Tibial artery (tissue), 4 donors: ENCODE measurements at regions of chr12 and their contacts with region 1.

Region 1: GRCh38 chr12:46661110-46661845 is 164.5 kb downstream of the SLC38A4 start:
- DNase-seq: peak in 1 of 2 donors; percentile 29
- H3K4me3 ChIP-seq: no peak overlapping the region
- H3K27ac ChIP-seq: peak overlapping the region; percentile 62 to 67
- H3K4me1 ChIP-seq: peaks cover 0 to 51% (median 43%) of the 10 kb centered on the region in 4 donors
- H3K27me3 ChIP-seq: no peaks in the 10 kb centered on the region
- CTCF ChIP-seq: peak; percentile 84 to 87

Region 2: GRCh38 chr12:46124848-46125619 is 536.2 kb before region 1 on chr12:
- intact Hi-C with region 1: loop called (anchors 10 kb)
- DNase-seq: peak in 1 of 2 donors; percentile 45
- H3K4me3 ChIP-seq: peak overlapping the region; percentile 24 to 40
- H3K27ac ChIP-seq: no peak overlapping the region
- H3K4me1 ChIP-seq: no peaks in the 10 kb centered on the region
- H3K27me3 ChIP-seq: no peaks in the 10 kb centered on the region
- CTCF ChIP-seq: peak; percentile 54 to 73

Region 3: GRCh38 chr12:46483572-46484395 is 177.5 kb before region 1 on chr12:
- intact Hi-C with region 1: loop called (anchors 5 kb)
- DNase-seq: no peak
- H3K4me3 ChIP-seq: no peak overlapping the region
- H3K27ac ChIP-seq: no peak overlapping the region
- H3K4me1 ChIP-seq: peaks cover 0 to 5% (median 0%) of the 10 kb centered on the region in 4 donors
- H3K27me3 ChIP-seq: no peaks in the 10 kb centered on the region
- CTCF ChIP-seq: no peak

Region 4: GRCh38 chr12:46693034-46693433 is 31.8 kb after region 1 on chr12:
- intact Hi-C with region 1: no loop called
- DNase-seq: no peak
- H3K4me3 ChIP-seq: no peak overlapping the region
- H3K27ac ChIP-seq: no peak overlapping the region
- H3K4me1 ChIP-seq: peaks cover 0 to 12% (median 0%) of the 10 kb centered on the region in 4 donors
- H3K27me3 ChIP-seq: no peaks in the 10 kb centered on the region
- CTCF ChIP-seq: no peak